A549 (cell line): ENCODE measurements at regions of chr19 and their contacts with region 1.

Region 1: GRCh38 chr19:46392243-46392801 is 21.0 kb downstream of the CCDC8 start:
- DNase-seq: no peak
- ATAC-seq: no peak
- H3K4me3 ChIP-seq: no peak overlapping the region
- H3K27ac ChIP-seq: no peak overlapping the region
- H3K4me1 ChIP-seq: no peaks in the 10 kb centered on the region
- CTCF ChIP-seq: no peak
- EP300 ChIP-seq: no peak
- POLR2A ChIP-seq: no peak
- RAD21 ChIP-seq: no peak

Region 2: DNA sequence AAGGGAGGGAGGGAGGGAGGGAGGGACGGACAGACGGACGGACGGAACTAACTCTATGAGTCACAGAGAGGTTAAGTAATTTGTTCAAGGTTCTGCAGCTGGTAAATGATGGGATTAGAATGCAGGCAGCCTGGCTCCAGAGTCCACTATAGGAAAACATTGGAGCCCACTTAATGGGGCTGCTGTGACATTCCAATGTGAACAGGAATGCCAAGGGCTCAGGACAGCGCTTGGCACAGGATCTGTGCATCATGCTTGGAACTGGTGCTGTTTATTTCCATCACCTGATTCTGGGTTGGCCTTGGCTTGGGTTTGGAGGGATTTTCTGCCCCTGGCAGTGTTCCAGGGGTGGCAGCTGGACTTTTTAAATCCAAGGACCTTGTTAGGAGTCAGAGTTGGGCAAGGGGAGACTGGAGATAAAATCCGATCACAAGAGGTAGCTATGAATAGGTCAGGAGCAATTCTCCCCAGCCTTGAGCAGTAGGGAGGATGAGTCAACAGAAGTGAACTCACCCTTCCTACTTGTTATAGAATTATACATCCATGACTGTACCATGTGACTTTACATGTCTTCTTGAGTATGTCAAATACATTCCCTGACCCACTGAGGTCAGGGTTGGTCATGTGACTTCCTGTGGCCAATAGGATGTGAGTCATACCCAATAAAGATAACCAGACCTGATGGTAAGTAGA is 103.3 kb before region 1 on chr19:
- CTCF ChIA-PET with region 1: interaction called, 73 read pairs
- POLR2A ChIA-PET with region 1: no interaction called
- DNase-seq: peak; percentile 73 to 74
- ATAC-seq: peak; percentile 87 to 88
- H3K4me3 ChIP-seq: no peak overlapping the region
- H3K27ac ChIP-seq: peak overlapping the region; percentile 61 to 68
- H3K4me1 ChIP-seq: peaks cover 11% of the 10 kb centered on the region
- CTCF ChIP-seq: no peak
- EP300 ChIP-seq: no peak
- POLR2A ChIP-seq: no peak
- RAD21 ChIP-seq: no peak

Region 3: GRCh38 chr19:46355234-46356148 is 36.8 kb before region 1 on chr19:
- CTCF ChIA-PET with region 1: interaction called, 30 read pairs
- POLR2A ChIA-PET with region 1: no interaction called
- DNase-seq: peak in 1 of 2 experiments; percentile 21
- ATAC-seq: peak in 1 of 2 experiments; percentile 31; a peak in 3 of 6 replicates
- H3K4me3 ChIP-seq: no peak overlapping the region
- H3K27ac ChIP-seq: peak overlapping the region in 1 of 2 experiments; percentile 45; a peak in 3 of 6 replicates
- H3K4me1 ChIP-seq: peaks cover 44% of the 10 kb centered on the region
- CTCF ChIP-seq: no peak
- EP300 ChIP-seq: no peak
- POLR2A ChIP-seq: no peak
- RAD21 ChIP-seq: no peak

Region 4: DNA sequence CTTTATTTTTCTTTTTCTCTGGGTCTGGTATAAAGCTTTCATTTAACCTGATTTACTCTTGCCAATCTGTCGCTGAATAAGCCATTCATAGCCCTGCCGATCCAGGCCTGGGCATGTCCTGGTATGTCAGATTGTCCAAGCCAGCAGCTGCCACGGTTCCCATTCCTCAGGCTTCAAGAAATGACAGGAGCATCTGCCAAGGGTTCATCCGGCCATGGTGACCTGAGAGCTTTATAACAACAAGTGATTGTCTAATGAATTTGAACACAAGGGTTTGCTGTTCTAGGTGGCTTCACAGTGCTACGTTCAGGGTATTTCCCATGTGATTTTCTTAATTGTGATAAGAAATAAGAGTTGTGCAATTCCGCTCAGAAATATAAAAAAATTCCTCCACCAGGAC is 59.0 kb after region 1 on chr19:
- CTCF ChIA-PET with region 1: interaction called, 12 read pairs
- POLR2A ChIA-PET with region 1: no interaction called
- DNase-seq: no peak
- ATAC-seq: no peak
- H3K4me3 ChIP-seq: no peak overlapping the region
- H3K27ac ChIP-seq: no peak overlapping the region
- H3K4me1 ChIP-seq: no peaks in the 10 kb centered on the region
- CTCF ChIP-seq: no peak
- EP300 ChIP-seq: no peak
- POLR2A ChIP-seq: no peak
- RAD21 ChIP-seq: no peak

Region 5: DNA sequence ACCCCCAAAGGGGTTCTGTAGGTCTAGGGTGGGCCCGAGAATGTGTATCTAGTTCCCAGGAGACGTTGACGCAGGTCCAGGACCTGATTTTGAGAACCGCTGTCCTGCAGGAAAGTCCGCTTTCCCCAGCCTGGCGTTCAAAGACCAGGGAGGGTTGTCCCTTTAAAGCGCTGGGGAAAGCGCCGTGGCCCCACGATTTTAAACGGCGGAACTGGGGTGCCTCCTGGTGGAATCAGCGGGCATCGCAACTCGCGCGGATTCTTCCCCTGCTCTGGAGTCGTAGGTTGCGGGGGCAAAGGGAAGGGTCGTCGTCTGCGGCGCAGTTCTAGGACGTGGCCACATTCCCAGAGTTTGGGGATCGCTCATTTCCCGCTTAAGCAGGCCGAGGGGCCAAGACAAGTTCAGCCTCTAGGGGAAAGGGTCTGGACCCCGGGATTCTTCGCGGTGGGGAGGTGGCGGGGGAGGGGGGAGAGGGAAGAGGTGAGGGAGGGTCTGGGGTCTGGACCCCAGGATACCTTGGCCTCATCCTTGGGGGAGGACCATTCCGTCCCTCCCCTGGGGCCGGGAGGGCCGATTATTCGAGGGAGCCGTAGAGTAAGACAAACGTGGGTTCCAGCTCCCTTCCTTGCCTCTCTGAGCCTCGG is 95.6 kb after region 1 on chr19:
- CTCF ChIA-PET with region 1: interaction called, 358 read pairs
- POLR2A ChIA-PET with region 1: no interaction called
- DNase-seq: peak; percentile 71 to 86
- ATAC-seq: peak; percentile 75 to 93
- H3K4me3 ChIP-seq: peak overlapping the region; percentile 46
- H3K27ac ChIP-seq: peak overlapping the region; percentile 65 to 72; a peak in 5 of 6 replicates
- H3K4me1 ChIP-seq: peaks cover 10% of the 10 kb centered on the region; the same call in 1 of the 3 replicates
- CTCF ChIP-seq: peak; percentile 98
- EP300 ChIP-seq: no peak
- POLR2A ChIP-seq: no peak
- RAD21 ChIP-seq: peak; percentile 99 to 100

Region 6: DNA sequence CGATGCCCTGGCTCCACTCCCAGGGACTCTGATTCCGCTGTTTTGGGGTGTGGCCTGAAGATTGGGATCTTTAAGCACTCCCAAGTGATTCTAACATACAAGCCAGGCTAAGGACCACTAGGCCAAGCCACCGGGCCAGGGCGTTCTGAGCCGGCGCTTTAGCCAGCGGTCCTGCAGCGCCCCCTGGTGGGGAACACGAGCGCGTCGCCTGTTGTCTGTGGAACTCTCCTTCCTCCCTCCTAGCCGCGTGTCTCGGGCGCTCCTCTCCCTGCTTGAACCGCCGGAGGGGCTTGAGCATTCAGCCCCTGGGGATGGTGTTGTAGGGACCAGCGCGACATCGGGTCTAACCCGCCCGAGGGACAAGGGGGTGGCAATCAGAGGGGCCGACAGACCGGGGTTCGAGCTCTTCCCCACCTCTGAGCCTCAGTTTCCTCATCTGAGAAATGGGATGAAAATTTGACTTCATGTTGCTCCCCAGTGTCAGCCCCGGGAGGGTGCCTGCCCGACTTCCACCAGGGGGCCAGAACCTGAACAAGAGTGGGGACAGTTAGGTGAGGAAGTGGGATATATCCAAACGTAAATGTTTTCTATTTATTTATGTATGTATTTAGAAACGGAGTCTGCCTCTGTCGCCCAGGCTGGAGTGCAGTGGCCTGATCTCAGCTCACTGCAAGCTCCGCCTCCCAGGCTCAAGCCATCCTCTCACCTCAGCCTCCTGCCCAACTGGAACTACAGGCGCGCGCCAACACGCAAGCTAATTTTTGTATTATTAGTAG is 121.3 kb after region 1 on chr19:
- CTCF ChIA-PET with region 1: interaction called, 101 read pairs
- POLR2A ChIA-PET with region 1: no interaction called
- DNase-seq: peak; percentile 83 to 88
- ATAC-seq: peak; percentile 91 to 94
- H3K4me3 ChIP-seq: no peak overlapping the region
- H3K27ac ChIP-seq: peak overlapping the region in 1 of 2 experiments; percentile 52; a peak in 1 of 6 replicates
- H3K4me1 ChIP-seq: peaks cover 16% of the 10 kb centered on the region; the same call in 2 of the 3 replicates
- CTCF ChIP-seq: peak; percentile 97
- EP300 ChIP-seq: no peak
- POLR2A ChIP-seq: no peak
- RAD21 ChIP-seq: peak; percentile 95 to 97

Region 7: DNA sequence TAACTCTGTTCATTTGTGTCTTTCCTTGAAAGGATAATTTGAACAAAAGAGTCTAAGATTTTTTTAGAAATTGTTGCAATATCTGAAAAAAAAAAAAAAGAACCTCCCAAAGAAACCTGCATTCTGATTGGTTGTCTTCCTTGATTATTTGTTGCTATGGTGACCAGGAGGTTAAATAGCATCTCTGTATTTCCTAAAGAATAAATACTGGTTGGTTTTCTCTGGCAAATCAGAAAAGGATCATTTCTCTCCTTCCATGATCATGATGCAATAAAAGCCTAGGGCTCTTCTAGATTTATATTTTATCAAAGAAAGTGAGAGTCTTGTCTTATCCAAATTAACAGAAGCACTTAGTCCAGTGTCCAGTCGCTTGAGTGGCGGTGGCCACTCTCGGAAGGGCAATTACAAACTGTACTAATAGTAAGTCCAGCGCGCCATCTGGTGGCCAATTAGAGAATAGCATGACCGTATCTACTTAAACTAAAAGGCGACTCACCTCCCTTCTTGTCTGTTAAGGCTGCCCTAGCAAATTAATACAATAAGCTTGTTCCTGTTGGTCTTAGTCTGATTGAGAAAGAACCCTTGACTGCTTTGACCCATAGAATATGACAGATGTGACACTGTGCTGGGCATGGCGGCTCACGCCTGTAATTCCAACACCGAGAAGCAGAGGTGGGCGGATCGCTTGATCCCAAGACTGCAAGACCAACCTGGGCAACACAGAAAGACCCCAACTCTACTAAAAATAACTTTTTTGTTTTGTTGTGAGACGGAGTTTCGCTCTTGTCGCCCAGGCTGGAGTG is 150.3 kb after region 1 on chr19:
- CTCF ChIA-PET with region 1: interaction called, 10 read pairs
- POLR2A ChIA-PET with region 1: no interaction called
- DNase-seq: peak; percentile 69 to 94
- ATAC-seq: peak; percentile 90 to 92
- H3K4me3 ChIP-seq: no peak overlapping the region
- H3K27ac ChIP-seq: no peak overlapping the region
- H3K4me1 ChIP-seq: no peaks in the 10 kb centered on the region
- CTCF ChIP-seq: peak; percentile 98
- EP300 ChIP-seq: no peak
- POLR2A ChIP-seq: no peak
- RAD21 ChIP-seq: peak; percentile 91 to 93

Region 8: DNA sequence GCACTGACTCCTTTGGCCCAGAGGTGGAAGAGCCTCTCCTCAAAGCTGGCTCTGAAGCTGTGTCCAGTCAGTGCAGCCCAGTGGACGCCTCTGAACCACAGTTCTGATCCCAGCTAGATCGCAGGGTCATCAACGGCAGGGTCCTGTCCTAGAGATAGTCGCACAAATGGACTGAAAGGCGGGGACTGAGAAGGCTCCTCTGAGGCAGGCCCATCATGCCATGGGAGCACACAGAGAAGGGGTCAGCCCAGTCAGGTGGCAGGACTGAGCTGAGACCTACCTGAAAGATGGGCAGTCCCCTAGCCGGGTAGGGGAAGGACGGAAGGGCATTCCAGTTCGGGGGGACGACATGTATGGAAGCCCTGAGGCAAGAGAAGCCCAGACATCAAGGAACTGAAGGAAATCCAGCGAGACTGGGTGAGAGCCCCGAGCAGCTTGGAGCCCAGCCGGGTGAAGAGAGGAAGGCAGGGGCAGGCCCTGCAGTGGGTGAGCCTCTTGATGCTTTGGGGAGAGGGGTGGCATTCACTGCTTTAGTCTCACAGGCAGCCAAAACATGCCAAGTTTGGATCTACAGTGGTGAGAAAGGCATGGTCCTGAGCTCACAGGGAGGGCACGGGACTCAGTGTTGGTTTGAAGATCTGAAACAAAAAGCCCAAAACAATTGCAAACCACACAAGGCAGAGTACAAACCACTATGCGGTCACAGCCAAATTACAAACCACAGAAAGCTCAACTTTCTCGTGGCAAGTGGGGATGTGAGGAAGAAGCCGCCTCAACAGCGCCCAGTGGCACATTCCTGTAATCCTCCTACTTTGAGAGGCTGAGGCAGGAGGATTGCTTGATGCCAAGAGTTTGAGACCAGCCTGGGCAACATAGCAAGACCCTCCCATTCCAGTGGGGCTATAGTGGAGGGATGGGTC is 218.8 kb after region 1 on chr19:
- CTCF ChIA-PET with region 1: no interaction called
- POLR2A ChIA-PET with region 1: no interaction called
- DNase-seq: no peak
- ATAC-seq: no peak
- H3K4me3 ChIP-seq: no peak overlapping the region
- H3K27ac ChIP-seq: no peak overlapping the region
- H3K4me1 ChIP-seq: no peaks in the 10 kb centered on the region
- CTCF ChIP-seq: no peak
- EP300 ChIP-seq: no peak
- POLR2A ChIP-seq: no peak; the same call in 1 of the 2 replicates
- RAD21 ChIP-seq: no peak